Thyroid gland (tissue), 4 donors: ENCODE measurements at regions of chr13 and their contacts with region 1.

Region 1: GRCh38 chr13:33931397-33932311 is 113.7 kb downstream of the RFC3 start:
- DNase-seq: peak in 1 of 2 donors; percentile 6
- H3K4me3 ChIP-seq: no peak overlapping the region
- H3K27ac ChIP-seq: no peak overlapping the region
- H3K4me1 ChIP-seq: peaks cover 0 to 7% of the 10 kb centered on the region in 2 donors
- H3K27me3 ChIP-seq: no peaks in the 10 kb centered on the region
- CTCF ChIP-seq: peak in 5 of 6 experiments; percentile 14 to 76 (median 63)
- POLR2A ChIP-seq: no peak

Region 2: GRCh38 chr13:33441015-33441414 is 490.6 kb before region 1 on chr13:
- intact Hi-C with region 1: no loop called
- DNase-seq: peak; percentile 64 to 74
- H3K4me3 ChIP-seq: no peak overlapping the region
- H3K27ac ChIP-seq: no peak overlapping the region
- H3K4me1 ChIP-seq: no peaks in the 10 kb centered on the region
- H3K27me3 ChIP-seq: no peaks in the 10 kb centered on the region
- CTCF ChIP-seq: peak in 4 of 6 experiments; percentile 49 to 76 (median 57)
- POLR2A ChIP-seq: no peak

Region 3: DNA sequence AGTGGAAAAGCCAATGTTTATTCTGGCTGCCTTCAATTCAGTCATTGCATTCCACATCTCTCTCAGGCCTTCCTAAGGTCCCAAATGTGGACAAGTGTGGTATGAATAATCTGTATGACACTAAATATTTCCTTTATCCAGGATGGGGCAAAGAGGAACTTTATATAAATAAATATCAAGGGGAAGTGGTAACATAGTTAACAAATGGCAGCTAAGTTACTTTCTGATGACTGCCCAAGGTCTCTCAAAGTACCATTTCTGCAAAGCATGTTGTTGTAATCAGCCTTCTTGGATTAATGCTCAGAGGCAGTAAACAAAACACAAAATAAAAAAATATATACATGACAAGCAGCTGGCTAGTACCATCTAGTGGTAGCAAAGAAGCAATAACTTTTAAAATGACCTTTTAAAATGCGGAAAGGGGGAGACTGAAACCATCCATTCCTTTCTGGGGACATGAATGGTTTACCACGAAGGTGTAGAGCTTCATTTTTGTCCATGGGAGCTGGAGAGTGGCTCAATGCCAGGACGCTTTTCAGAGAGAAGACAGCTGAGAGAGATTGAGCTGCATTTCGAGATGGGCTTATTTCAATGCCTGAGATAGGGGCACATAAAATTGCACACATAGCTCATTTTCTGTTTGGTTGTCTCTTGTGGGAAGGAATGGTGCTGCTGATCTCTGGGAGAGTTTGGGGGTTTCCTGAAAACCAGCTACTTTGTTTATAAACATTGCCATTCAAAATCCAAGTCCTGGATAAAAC is 145.5 kb after region 1 on chr13:
- intact Hi-C with region 1: loop called (anchors 10 kb)
- DNase-seq: peak in 1 of 2 donors; percentile 10
- H3K4me3 ChIP-seq: no peak overlapping the region
- H3K27ac ChIP-seq: no peak overlapping the region
- H3K4me1 ChIP-seq: no peaks in the 10 kb centered on the region
- H3K27me3 ChIP-seq: no peaks in the 10 kb centered on the region
- CTCF ChIP-seq: peak in 5 of 6 experiments; percentile 39 to 72 (median 64)
- POLR2A ChIP-seq: no peak

Region 4: GRCh38 chr13:35157143-35157755 is 1225.6 kb after region 1 on chr13:
- intact Hi-C with region 1: loop called (anchors 5 kb)
- DNase-seq: peak; percentile 21 to 34
- H3K4me3 ChIP-seq: no peak overlapping the region
- H3K27ac ChIP-seq: no peak overlapping the region
- H3K4me1 ChIP-seq: no peaks in the 10 kb centered on the region
- H3K27me3 ChIP-seq: no peaks in the 10 kb centered on the region
- CTCF ChIP-seq: peak in 5 of 6 experiments; percentile 47 to 83 (median 71)
- POLR2A ChIP-seq: no peak